PC-9 (cell line): ENCODE measurements at regions of chr14 and their contacts with region 1.

Region 1: DNA sequence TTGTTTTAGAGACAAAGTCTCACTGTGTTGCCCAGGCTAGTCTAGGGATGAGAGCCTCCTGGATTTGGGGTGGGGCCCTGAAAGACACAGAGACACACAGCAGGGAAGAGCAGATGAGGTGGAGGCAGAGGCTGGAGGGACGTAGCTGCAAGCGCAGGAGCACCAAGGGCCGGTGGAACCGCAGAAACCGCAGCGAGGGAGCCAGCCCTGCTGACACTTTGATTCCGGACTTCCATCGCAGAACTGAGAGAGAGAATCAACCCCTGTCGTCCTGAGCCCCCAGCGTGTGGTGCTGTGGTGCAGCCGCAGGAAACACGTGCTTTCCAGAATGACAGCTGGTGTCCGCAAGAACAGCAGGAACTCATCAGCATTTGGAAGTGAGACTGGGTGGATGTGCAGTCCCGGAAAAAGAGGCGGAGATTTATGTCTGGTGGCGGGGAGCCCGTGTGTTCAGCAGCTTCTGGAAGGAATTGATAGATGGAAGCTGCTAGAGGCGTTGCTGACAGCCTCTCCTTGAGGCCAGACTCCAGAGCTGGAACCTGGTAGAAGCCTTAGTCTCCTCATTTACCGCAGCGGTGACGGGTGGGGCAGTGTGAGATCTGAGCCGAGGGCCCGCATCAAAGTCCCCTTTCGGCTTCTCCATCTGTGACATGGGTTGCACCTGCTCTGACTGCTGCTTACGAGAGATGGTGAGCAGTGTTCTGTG is 21.9 kb upstream of the KLC1 start:
- DNase-seq: no peak
- H3K4me3 ChIP-seq: no peak overlapping the region
- H3K27ac ChIP-seq: no peak overlapping the region
- H3K4me1 ChIP-seq: no peaks in the 10 kb centered on the region
- H3K27me3 ChIP-seq: no peaks in the 10 kb centered on the region
- CTCF ChIP-seq: no peak

Region 2: DNA sequence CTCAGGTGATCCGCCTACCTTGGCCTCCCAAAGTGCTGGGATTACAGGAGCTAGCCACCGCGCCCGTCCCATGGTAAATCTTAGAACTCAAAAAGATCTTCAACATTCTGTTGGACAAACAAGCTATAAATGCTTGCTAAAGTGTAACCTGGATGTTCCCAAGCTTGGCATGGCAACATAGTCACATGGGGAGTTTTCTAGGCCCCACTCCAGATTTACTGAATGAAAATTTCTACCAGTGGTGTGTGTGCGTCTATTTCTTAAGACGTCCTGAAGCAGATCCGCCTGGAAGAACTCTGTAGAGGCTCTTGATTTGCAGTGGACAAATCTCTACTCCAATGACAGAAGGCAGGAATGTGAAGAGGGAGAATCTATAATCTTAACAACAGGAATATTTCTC is 168.4 kb after region 1 on chr14:
- CTCF ChIA-PET with region 1: interaction called, 14 read pairs
- POLR2A ChIA-PET with region 1: no interaction called
- intact Hi-C with region 1: no loop called
- DNase-seq: no peak
- H3K4me3 ChIP-seq: no peak overlapping the region
- H3K27ac ChIP-seq: no peak overlapping the region
- H3K4me1 ChIP-seq: no peaks in the 10 kb centered on the region
- H3K27me3 ChIP-seq: no peaks in the 10 kb centered on the region
- CTCF ChIP-seq: no peak